Natural killer cell (primary cell): ENCODE measurements at regions of chr2 and their contacts with region 1.

Region 1: GRCh38 chr2:3518496-3519254 is 656 bp downstream of the ADI1 start:
- DNase-seq: peak; percentile 98 to 99
- ATAC-seq: peak; percentile 80 to 89 (median 81)
- H3K4me3 ChIP-seq: peak overlapping the region; percentile 79
- H3K4me3 Mint-ChIP-seq: peak overlapping the region; percentile 92
- H3K27ac ChIP-seq: peak overlapping the region; percentile 82
- H3K27ac Mint-ChIP-seq: peak overlapping the region; percentile 77 to 95
- H3K4me1 ChIP-seq: peaks cover 13% of the 10 kb centered on the region
- H3K4me1 Mint-ChIP-seq: peaks cover 25 to 33% of the 10 kb centered on the region in 2 donors
- H3K27me3 ChIP-seq: no peaks in the 10 kb centered on the region
- H3K27me3 Mint-ChIP-seq: no peaks in the 10 kb centered on the region
- CTCF ChIP-seq: no peak

Region 2: DNA sequence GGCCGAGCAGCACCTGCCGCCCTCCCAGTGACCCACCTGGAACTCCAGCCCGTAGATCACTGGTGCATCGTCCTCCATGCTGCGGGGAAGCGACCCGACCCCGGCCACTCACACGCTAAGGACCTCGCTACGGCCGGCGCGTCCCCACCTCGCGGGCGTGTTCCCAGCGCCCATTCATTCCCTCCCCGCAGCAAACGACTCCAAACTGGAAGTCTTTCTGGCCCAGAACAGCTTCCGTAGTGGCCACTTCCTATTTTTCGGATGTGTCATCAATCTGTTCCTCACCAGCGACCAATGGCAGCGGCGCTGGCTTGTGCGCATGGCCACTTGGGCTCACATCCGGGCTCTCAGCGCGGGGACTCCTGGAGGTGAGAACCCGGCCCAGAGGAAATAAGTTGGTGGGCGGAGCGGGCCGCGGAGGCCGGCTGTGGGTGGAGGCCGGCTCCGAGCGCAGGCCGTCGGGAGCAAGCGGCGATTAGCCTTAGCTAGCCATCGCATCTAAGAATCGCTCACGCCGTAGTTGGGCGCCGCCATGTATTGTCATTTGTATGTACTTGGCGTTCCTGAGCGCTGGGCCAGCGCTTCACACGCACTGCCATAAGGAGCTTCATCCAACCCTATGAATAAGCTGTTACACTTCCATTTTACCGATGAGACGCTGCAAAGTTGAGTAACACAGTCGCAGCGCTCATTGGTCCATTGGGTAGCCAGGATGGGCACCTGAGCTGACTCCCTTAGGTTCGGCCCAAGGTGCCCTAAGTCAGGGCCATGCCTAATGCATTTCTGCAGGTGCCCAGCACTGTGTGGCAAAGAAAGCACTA is 140.9 kb before region 1 on chr2 and contains the start of gene EIPR1:
- intact Hi-C with region 1: loop called (anchors 1 kb)
- DNase-seq: peak; percentile 97 to 98
- ATAC-seq: peak; percentile 79 to 89 (median 84)
- H3K4me3 ChIP-seq: peak within 1 kb of the TSS; percentile 59
- H3K4me3 Mint-ChIP-seq: peak within 1 kb of the TSS; percentile 96
- H3K27ac ChIP-seq: peak within 1 kb of the TSS; percentile 88
- H3K27ac Mint-ChIP-seq: peak within 1 kb of the TSS; percentile 96 to 98
- H3K4me1 ChIP-seq: peaks cover 31% of the 10 kb centered on the region
- H3K4me1 Mint-ChIP-seq: peaks cover 28 to 46% of the 10 kb centered on the region in 2 donors
- H3K27me3 ChIP-seq: no peaks in the 10 kb centered on the region
- H3K27me3 Mint-ChIP-seq: no peaks in the 10 kb centered on the region
- CTCF ChIP-seq: no peak
- total RNA-seq, gene EIPR1: 26.8 to 28.8 (median 27.9) TPM

Region 3: GRCh38 chr2:3558205-3559014 is 39.7 kb after region 1 on chr2 and contains the start of gene RNASEH1:
- intact Hi-C with region 1: loop called (anchors 1 kb)
- DNase-seq: peak; percentile 99 to 100
- ATAC-seq: peak; percentile 95 to 100 (median 95)
- H3K4me3 ChIP-seq: peak within 1 kb of the TSS; percentile 97
- H3K4me3 Mint-ChIP-seq: peak within 1 kb of the TSS; percentile 90
- H3K27ac ChIP-seq: peak within 1 kb of the TSS; percentile 97
- H3K27ac Mint-ChIP-seq: peak within 1 kb of the TSS; percentile 91 to 98
- H3K4me1 ChIP-seq: peaks cover 14% of the 10 kb centered on the region
- H3K4me1 Mint-ChIP-seq: peaks cover 15 to 28% of the 10 kb centered on the region in 2 donors
- H3K27me3 ChIP-seq: no peaks in the 10 kb centered on the region
- H3K27me3 Mint-ChIP-seq: no peaks in the 10 kb centered on the region
- CTCF ChIP-seq: no peak
- total RNA-seq, gene RNASEH1: 25.6 to 30.6 (median 26.3) TPM

Region 4: DNA sequence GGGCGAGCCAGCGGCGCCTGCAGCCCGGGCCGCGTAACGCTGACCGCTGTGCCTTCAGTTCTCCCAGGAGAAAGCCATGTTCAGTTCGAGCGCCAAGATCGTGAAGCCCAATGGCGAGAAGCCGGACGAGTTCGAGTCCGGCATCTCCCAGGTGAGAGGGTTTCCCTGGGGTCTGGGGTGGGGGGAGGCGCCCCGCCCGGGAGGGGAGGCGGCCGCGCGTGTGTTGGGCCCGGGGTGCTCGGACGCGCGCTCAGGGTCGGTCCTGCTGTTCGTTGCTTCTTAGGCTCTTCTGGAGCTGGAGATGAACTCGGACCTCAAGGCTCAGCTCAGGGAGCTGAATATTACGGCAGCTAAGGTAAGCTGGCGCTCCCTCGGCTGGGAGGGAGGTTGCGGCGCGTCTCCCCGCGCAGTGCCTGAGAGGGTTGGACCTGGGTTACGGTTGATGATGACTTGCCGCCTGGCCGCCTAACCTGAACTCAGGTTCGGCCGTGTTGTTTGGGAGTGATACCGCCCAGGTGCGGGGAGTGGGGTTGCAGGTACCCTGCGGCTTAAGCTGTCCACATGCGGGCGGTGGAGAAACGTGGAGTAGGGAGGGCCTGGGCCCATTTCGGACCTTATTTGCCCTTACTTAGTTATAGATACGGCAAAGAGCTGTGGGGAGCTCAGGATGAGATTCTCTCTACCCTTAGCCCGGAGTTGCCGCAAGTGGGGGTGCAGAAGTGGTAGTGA is 57.0 kb after region 1 on chr2:
- intact Hi-C with region 1: loop called (anchors 1 kb)
- DNase-seq: peak in 1 of 2 donors; percentile 61
- ATAC-seq: peak; percentile 29 to 60 (median 50)
- H3K4me3 ChIP-seq: peak overlapping the region; percentile 59
- H3K4me3 Mint-ChIP-seq: peak overlapping the region; percentile 91
- H3K27ac ChIP-seq: peak overlapping the region; percentile 78
- H3K27ac Mint-ChIP-seq: peak overlapping the region; percentile 91 to 93
- H3K4me1 ChIP-seq: peaks cover 18% of the 10 kb centered on the region
- H3K4me1 Mint-ChIP-seq: peaks cover 39 to 46% of the 10 kb centered on the region in 2 donors
- H3K27me3 ChIP-seq: no peaks in the 10 kb centered on the region
- H3K27me3 Mint-ChIP-seq: no peaks in the 10 kb centered on the region
- CTCF ChIP-seq: no peak

Region 5: GRCh38 chr2:3680548-3681345 is 162.1 kb after region 1 on chr2:
- intact Hi-C with region 1: no loop called
- DNase-seq: no peak
- ATAC-seq: no peak
- H3K4me3 ChIP-seq: no peak overlapping the region
- H3K4me3 Mint-ChIP-seq: no peak overlapping the region
- H3K27ac ChIP-seq: no peak overlapping the region
- H3K27ac Mint-ChIP-seq: no peak overlapping the region
- H3K4me1 ChIP-seq: no peaks in the 10 kb centered on the region
- H3K4me1 Mint-ChIP-seq: no peaks in the 10 kb centered on the region
- H3K27me3 ChIP-seq: no peaks in the 10 kb centered on the region
- H3K27me3 Mint-ChIP-seq: peaks cover 0 to 3% of the 10 kb centered on the region in 2 donors
- CTCF ChIP-seq: no peak

Region 6: GRCh38 chr2:3801506-3801905 is 282.8 kb after region 1 on chr2:
- intact Hi-C with region 1: no loop called
- DNase-seq: no peak
- ATAC-seq: no peak
- H3K4me3 ChIP-seq: no peak overlapping the region
- H3K4me3 Mint-ChIP-seq: no peak overlapping the region
- H3K27ac ChIP-seq: no peak overlapping the region
- H3K27ac Mint-ChIP-seq: no peak overlapping the region
- H3K4me1 ChIP-seq: no peaks in the 10 kb centered on the region
- H3K4me1 Mint-ChIP-seq: no peaks in the 10 kb centered on the region
- H3K27me3 ChIP-seq: no peaks in the 10 kb centered on the region
- H3K27me3 Mint-ChIP-seq: peaks cover 0 to 7% of the 10 kb centered on the region in 2 donors
- CTCF ChIP-seq: no peak